Naive thymus-derived CD4-positive, alpha-beta T cell (primary cell): ENCODE measurements at regions of chr4 and their contacts with region 1.

Region 1: DNA sequence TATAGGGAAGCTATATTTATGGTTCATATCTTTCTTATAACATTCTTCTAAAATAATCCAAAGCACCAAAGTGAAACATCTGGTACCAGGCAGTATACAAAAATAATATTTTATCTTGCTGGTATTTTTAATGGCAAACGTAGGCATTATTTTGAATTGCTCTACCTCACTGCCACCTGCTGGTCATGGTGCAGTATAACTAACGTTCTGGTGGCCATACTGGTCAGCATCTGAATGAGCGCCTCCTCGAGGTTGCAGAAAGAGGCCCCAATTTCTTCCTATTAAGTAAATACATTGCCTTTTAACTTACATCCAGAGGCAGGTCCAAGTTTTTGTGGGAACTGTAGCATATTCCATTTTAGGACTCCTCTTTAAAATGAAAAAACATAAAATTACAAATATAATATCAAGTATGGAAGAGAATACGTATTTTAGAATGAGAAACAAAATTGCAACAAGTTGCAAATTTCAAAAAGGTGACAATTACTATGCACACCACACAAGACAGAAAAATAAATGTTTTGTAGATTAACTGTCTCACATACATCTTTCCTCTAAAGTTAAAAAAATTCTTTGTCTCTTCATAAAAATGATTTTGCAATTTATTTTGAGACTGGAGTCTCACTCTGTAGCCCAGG is 22.9 kb upstream of the CWH43 start:
- DNase-seq: peak; percentile 39 to 84 (median 74)
- ATAC-seq: peak; percentile 99
- H3K4me3 ChIP-seq: no peak overlapping the region
- H3K4me3 Mint-ChIP-seq: no peak overlapping the region
- H3K27ac ChIP-seq: no peak overlapping the region
- H3K27ac Mint-ChIP-seq: peak overlapping the region in 1 of 9 donors; percentile 59
- H3K4me1 ChIP-seq: no peaks in the 10 kb centered on the region
- H3K4me1 Mint-ChIP-seq: peaks cover 0 to 5% (median 3%) of the 10 kb centered on the region in 7 donors
- H3K27me3 ChIP-seq: no peaks in the 10 kb centered on the region
- H3K27me3 Mint-ChIP-seq: peaks cover 0 to 11% (median 0%) of the 10 kb centered on the region in 5 donors

Region 2: DNA sequence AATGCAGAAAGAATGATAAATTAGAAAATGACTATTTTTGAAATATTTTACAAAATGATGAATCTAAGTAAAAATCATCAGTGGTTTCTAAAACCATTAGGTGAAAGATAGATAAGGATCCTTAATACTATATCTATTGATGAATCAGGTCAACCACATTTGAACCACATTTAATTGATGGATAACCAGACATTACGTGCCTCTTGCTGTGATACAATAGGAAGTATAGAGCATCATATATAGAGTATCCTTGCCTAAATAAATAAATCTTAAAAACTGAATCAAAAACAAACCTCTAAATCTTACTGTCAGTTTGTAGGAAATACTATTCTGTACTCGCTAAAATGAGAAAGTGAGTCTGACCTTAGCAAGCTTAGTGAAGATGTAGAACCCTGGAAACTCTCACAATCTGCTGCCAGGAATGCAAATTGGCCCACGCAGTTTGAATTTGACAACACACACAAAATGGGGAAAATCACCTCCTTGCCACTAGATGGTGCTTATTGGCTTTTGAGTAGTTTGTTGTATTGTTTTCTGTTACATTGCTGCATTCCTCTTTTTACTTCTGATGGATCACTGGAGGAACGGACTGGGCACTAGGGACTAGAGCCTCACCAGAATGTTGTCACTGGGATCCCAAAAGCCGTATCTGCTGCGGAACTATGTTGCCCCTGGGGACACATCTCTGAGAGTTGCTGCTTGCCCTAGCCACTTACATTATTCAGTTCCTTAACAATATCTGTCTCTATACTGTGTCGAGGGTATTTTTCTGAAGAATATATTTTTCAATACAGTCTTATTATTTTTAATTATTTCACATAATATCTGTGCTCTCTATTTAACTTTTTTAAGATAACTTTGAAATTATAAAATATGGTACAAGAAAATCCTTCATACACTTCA is 647.2 kb before region 1 on chr4:
- CTCF ChIA-PET with region 1: no interaction called
- POLR2A ChIA-PET with region 1: no interaction called
- intact Hi-C with region 1: loop called (anchors 1 to 5 kb)
- DNase-seq: peak in 7 of 9 donors; percentile 13 to 53 (median 33)
- ATAC-seq: peak; percentile 61
- H3K4me3 ChIP-seq: no peak overlapping the region
- H3K4me3 Mint-ChIP-seq: no peak overlapping the region
- H3K27ac ChIP-seq: no peak overlapping the region
- H3K27ac Mint-ChIP-seq: peak overlapping the region in 1 of 9 donors; percentile 46
- H3K4me1 ChIP-seq: no peaks in the 10 kb centered on the region
- H3K4me1 Mint-ChIP-seq: peaks cover 0 to 5% (median 0%) of the 10 kb centered on the region in 7 donors
- H3K27me3 ChIP-seq: no peaks in the 10 kb centered on the region
- H3K27me3 Mint-ChIP-seq: peaks cover 0 to 6% (median 0%) of the 10 kb centered on the region in 5 donors

Region 3: GRCh38 chr4:48578132-48578968 is 384.8 kb before region 1 on chr4:
- CTCF ChIA-PET with region 1: interaction called, 35 read pairs
- POLR2A ChIA-PET with region 1: no interaction called
- intact Hi-C with region 1: loop called (anchors 1 kb)
- DNase-seq: peak in 8 of 9 donors; percentile 29 to 66 (median 50)
- ATAC-seq: peak; percentile 95
- H3K4me3 ChIP-seq: no peak overlapping the region
- H3K4me3 Mint-ChIP-seq: no peak overlapping the region
- H3K27ac ChIP-seq: no peak overlapping the region
- H3K27ac Mint-ChIP-seq: peak overlapping the region in 6 of 9 donors; percentile 28 to 79 (median 52)
- H3K4me1 ChIP-seq: no peaks in the 10 kb centered on the region
- H3K4me1 Mint-ChIP-seq: peaks cover 0 to 7% (median 0%) of the 10 kb centered on the region in 7 donors
- H3K27me3 ChIP-seq: no peaks in the 10 kb centered on the region
- H3K27me3 Mint-ChIP-seq: no peaks in the 10 kb centered on the region

Region 4: GRCh38 chr4:48877827-48878533 is 85.2 kb before region 1 on chr4:
- CTCF ChIA-PET with region 1: no interaction called
- POLR2A ChIA-PET with region 1: no interaction called
- intact Hi-C with region 1: loop called in 1 of 2 experiments (anchors 1 kb)
- DNase-seq: no peak
- ATAC-seq: no peak
- H3K4me3 ChIP-seq: no peak overlapping the region
- H3K4me3 Mint-ChIP-seq: no peak overlapping the region
- H3K27ac ChIP-seq: no peak overlapping the region
- H3K27ac Mint-ChIP-seq: peak overlapping the region in 1 of 9 donors; percentile 11
- H3K4me1 ChIP-seq: no peaks in the 10 kb centered on the region
- H3K4me1 Mint-ChIP-seq: no peaks in the 10 kb centered on the region
- H3K27me3 ChIP-seq: no peaks in the 10 kb centered on the region
- H3K27me3 Mint-ChIP-seq: peaks cover 0 to 1% (median 0%) of the 10 kb centered on the region in 5 donors

Region 5: GRCh38 chr4:48944756-48945241 is 18.4 kb before region 1 on chr4:
- CTCF ChIA-PET with region 1: interaction called, 10 read pairs
- POLR2A ChIA-PET with region 1: no interaction called
- intact Hi-C with region 1: loop called in 1 of 2 experiments (anchors 1 kb)
- DNase-seq: peak in 8 of 9 donors; percentile 34 to 73 (median 60)
- ATAC-seq: peak; percentile 89
- H3K4me3 ChIP-seq: peak overlapping the region; percentile 25
- H3K4me3 Mint-ChIP-seq: peak overlapping the region in 9 of 10 donors; percentile 13 to 76 (median 68)
- H3K27ac ChIP-seq: no peak overlapping the region
- H3K27ac Mint-ChIP-seq: peak overlapping the region in 7 of 9 donors; percentile 27 to 88 (median 62)
- H3K4me1 ChIP-seq: peaks cover 0 to 18% of the 10 kb centered on the region in 2 donors
- H3K4me1 Mint-ChIP-seq: peaks cover 6 to 57% (median 40%) of the 10 kb centered on the region in 7 donors
- H3K27me3 ChIP-seq: no peaks in the 10 kb centered on the region
- H3K27me3 Mint-ChIP-seq: peaks cover 0 to 18% (median 0%) of the 10 kb centered on the region in 5 donors

Region 6: GRCh38 chr4:49032440-49033161 is 69.4 kb after region 1 on chr4:
- CTCF ChIA-PET with region 1: no interaction called
- POLR2A ChIA-PET with region 1: no interaction called
- intact Hi-C with region 1: no loop called
- DNase-seq: no peak
- ATAC-seq: no peak
- H3K4me3 ChIP-seq: no peak overlapping the region
- H3K4me3 Mint-ChIP-seq: no peak overlapping the region
- H3K27ac ChIP-seq: no peak overlapping the region
- H3K27ac Mint-ChIP-seq: peak overlapping the region in 1 of 9 donors; percentile 63
- H3K4me1 ChIP-seq: no peaks in the 10 kb centered on the region
- H3K4me1 Mint-ChIP-seq: no peaks in the 10 kb centered on the region
- H3K27me3 ChIP-seq: peaks cover 0 to 3% of the 10 kb centered on the region in 2 donors
- H3K27me3 Mint-ChIP-seq: peaks cover 0 to 51% (median 40%) of the 10 kb centered on the region in 5 donors